CD8-positive, alpha-beta memory T cell (primary cell): ENCODE measurements at regions of chr1 and their contacts with region 1.

Region 1: GRCh38 chr1:206912445-206913095 is 9.2 kb downstream of the FCMR start:
- DNase-seq: peak in 4 of 5 donors; percentile 51 to 74 (median 67)
- H3K4me3 ChIP-seq: no peak overlapping the region
- H3K4me3 Mint-ChIP-seq: peak overlapping the region; percentile 21 to 64 (median 43)
- H3K27ac ChIP-seq: no peak overlapping the region
- H3K27ac Mint-ChIP-seq: peak overlapping the region in 6 of 8 donors; percentile 69 to 95 (median 90)
- H3K4me1 ChIP-seq: peaks cover 91% of the 10 kb centered on the region
- H3K4me1 Mint-ChIP-seq: peaks cover 85 to 95% (median 95%) of the 10 kb centered on the region in 3 donors
- H3K27me3 ChIP-seq: no peaks in the 10 kb centered on the region
- H3K27me3 Mint-ChIP-seq: peaks cover 0 to 1% of the 10 kb centered on the region in 2 donors

Region 2: GRCh38 chr1:206674745-206675175 is 237.8 kb before region 1 on chr1:
- CTCF ChIA-PET with region 1: no interaction called
- POLR2A ChIA-PET with region 1: no interaction called
- DNase-seq: no peak
- H3K4me3 ChIP-seq: no peak overlapping the region
- H3K4me3 Mint-ChIP-seq: no peak overlapping the region
- H3K27ac ChIP-seq: no peak overlapping the region
- H3K27ac Mint-ChIP-seq: no peak overlapping the region
- H3K4me1 ChIP-seq: peaks cover under 1% of the 10 kb centered on the region
- H3K4me1 Mint-ChIP-seq: peaks cover 0 to 9% (median 1%) of the 10 kb centered on the region in 3 donors
- H3K27me3 ChIP-seq: no peaks in the 10 kb centered on the region
- H3K27me3 Mint-ChIP-seq: peaks cover 4% of the 10 kb centered on the region in 2 donors

Region 3: GRCh38 chr1:206725109-206725963 is 187.2 kb before region 1 on chr1:
- CTCF ChIA-PET with region 1: interaction called, 33 read pairs
- POLR2A ChIA-PET with region 1: interaction called, 5 read pairs
- DNase-seq: peak in 4 of 5 donors; percentile 46 to 64 (median 49)
- H3K4me3 ChIP-seq: no peak overlapping the region
- H3K4me3 Mint-ChIP-seq: peak overlapping the region in 5 of 7 donors; percentile 6 to 44 (median 16)
- H3K27ac ChIP-seq: no peak overlapping the region
- H3K27ac Mint-ChIP-seq: peak overlapping the region; percentile 37 to 83 (median 68)
- H3K4me1 ChIP-seq: peaks cover 23% of the 10 kb centered on the region
- H3K4me1 Mint-ChIP-seq: peaks cover 68 to 76% (median 72%) of the 10 kb centered on the region in 3 donors
- H3K27me3 ChIP-seq: no peaks in the 10 kb centered on the region
- H3K27me3 Mint-ChIP-seq: peaks cover 0 to 3% of the 10 kb centered on the region in 2 donors

Region 4: GRCh38 chr1:206865013-206865671 is 47.4 kb before region 1 on chr1 and contains the start of gene IL20:
- CTCF ChIA-PET with region 1: interaction called, 18 read pairs
- POLR2A ChIA-PET with region 1: no interaction called
- DNase-seq: peak; percentile 67 to 87 (median 79)
- H3K4me3 ChIP-seq: no peak within 1 kb of the TSS
- H3K4me3 Mint-ChIP-seq: no peak within 1 kb of the TSS
- H3K27ac ChIP-seq: no peak within 1 kb of the TSS
- H3K27ac Mint-ChIP-seq: no peak within 1 kb of the TSS
- H3K4me1 ChIP-seq: no peaks in the 10 kb centered on the region
- H3K4me1 Mint-ChIP-seq: peaks cover 0 to 5% (median 2%) of the 10 kb centered on the region in 3 donors
- H3K27me3 ChIP-seq: no peaks in the 10 kb centered on the region
- H3K27me3 Mint-ChIP-seq: peaks cover 17 to 25% of the 10 kb centered on the region in 2 donors
- total RNA-seq, gene IL20: not detected

Region 5: DNA sequence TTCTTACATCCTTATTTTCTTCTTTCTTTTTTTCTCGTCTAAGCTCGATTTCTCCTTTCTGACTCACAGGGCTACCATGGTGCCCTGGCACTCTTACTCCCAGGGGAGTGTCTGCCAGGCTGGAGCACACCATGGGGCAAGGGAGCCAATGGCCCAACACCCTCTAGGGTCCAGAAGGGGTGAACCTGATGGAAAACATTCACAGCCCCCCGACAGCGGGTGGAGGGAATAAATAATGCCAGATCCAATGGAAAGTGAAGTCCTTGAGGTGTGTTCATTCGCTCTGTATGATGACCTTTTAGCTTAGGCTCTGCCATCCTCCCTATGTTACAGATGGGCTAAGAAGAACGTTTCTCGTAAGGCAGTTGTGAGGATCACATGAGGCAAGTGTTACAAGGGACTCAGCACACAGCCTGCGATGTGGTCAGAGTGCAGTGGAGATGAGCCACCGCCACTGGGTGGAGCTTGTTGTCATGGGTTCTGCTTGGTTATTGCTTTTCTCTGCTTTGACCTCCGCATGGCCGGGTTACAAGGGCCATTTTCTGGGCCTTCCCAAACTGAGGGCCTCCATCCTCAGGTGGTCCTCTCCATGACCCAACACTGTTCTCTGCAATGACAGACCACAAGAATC is 12.7 kb after region 1 on chr1:
- CTCF ChIA-PET with region 1: interaction called, 138 read pairs
- POLR2A ChIA-PET with region 1: interaction called, 25 read pairs
- DNase-seq: peak; percentile 32 to 83 (median 63)
- H3K4me3 ChIP-seq: no peak overlapping the region
- H3K4me3 Mint-ChIP-seq: no peak overlapping the region
- H3K27ac ChIP-seq: peak overlapping the region; percentile 27
- H3K27ac Mint-ChIP-seq: no peak overlapping the region
- H3K4me1 ChIP-seq: peaks cover 51% of the 10 kb centered on the region
- H3K4me1 Mint-ChIP-seq: peaks cover 28 to 35% (median 29%) of the 10 kb centered on the region in 3 donors
- H3K27me3 ChIP-seq: no peaks in the 10 kb centered on the region
- H3K27me3 Mint-ChIP-seq: no peaks in the 10 kb centered on the region

Region 6: GRCh38 chr1:206975306-206975705 is 62.7 kb after region 1 on chr1:
- CTCF ChIA-PET with region 1: no interaction called
- POLR2A ChIA-PET with region 1: no interaction called
- DNase-seq: no peak
- H3K4me3 ChIP-seq: no peak overlapping the region
- H3K4me3 Mint-ChIP-seq: no peak overlapping the region
- H3K27ac ChIP-seq: no peak overlapping the region
- H3K27ac Mint-ChIP-seq: no peak overlapping the region
- H3K4me1 ChIP-seq: no peaks in the 10 kb centered on the region
- H3K4me1 Mint-ChIP-seq: no peaks in the 10 kb centered on the region
- H3K27me3 ChIP-seq: no peaks in the 10 kb centered on the region
- H3K27me3 Mint-ChIP-seq: peaks cover 8 to 18% of the 10 kb centered on the region in 2 donors